Endothelial cell of umbilical vein (primary cell): ENCODE measurements at regions of chr7 and their contacts with region 1.

Region 1: GRCh38 chr7:83005410-83005809 is 157.3 kb downstream of the PCLO start:
- DNase-seq: peak; percentile 26
- H3K4me3 ChIP-seq: no peak overlapping the region
- H3K27ac ChIP-seq: no peak overlapping the region
- H3K4me1 ChIP-seq: no peaks in the 10 kb centered on the region
- H3K27me3 ChIP-seq: no peaks in the 10 kb centered on the region
- CTCF ChIP-seq: peak in 1 of 2 donors; percentile 17
- POLR2A ChIP-seq: no peak

Region 2: GRCh38 chr7:83271212-83272099 is 266.0 kb after region 1 on chr7:
- CTCF ChIA-PET with region 1: no interaction called
- POLR2A ChIA-PET with region 1: no interaction called
- dilution Hi-C with region 1: no loop called
- intact Hi-C with region 1: loop called (anchors 5 kb)
- DNase-seq: peak; percentile 55
- H3K4me3 ChIP-seq: no peak overlapping the region
- H3K27ac ChIP-seq: no peak overlapping the region
- H3K4me1 ChIP-seq: no peaks in the 10 kb centered on the region
- H3K27me3 ChIP-seq: no peaks in the 10 kb centered on the region
- CTCF ChIP-seq: peak in 1 of 2 donors; percentile 23
- POLR2A ChIP-seq: no peak

Region 3: GRCh38 chr7:83365746-83366145 is 360.3 kb after region 1 on chr7:
- CTCF ChIA-PET with region 1: no interaction called
- POLR2A ChIA-PET with region 1: no interaction called
- dilution Hi-C with region 1: no loop called
- intact Hi-C with region 1: loop called (anchors 10 kb)
- DNase-seq: peak; percentile 13
- H3K4me3 ChIP-seq: no peak overlapping the region
- H3K27ac ChIP-seq: no peak overlapping the region
- H3K4me1 ChIP-seq: no peaks in the 10 kb centered on the region
- H3K27me3 ChIP-seq: peaks cover 0 to 6% of the 10 kb centered on the region in 2 experiments
- CTCF ChIP-seq: no peak
- POLR2A ChIP-seq: no peak